Right lobe of liver (tissue), 6 donors: ENCODE measurements at regions of chr19 and their contacts with region 1.

Region 1: GRCh38 chr19:11035441-11036377 is 53.6 kb upstream of the LDLR start:
- DNase-seq: peak; percentile 92 to 93 (median 93)
- ATAC-seq: peak; percentile 97 to 99 (median 98)
- H3K4me3 ChIP-seq: no peak overlapping the region
- H3K27ac ChIP-seq: no peak overlapping the region
- H3K4me1 ChIP-seq: no peaks in the 10 kb centered on the region
- H3K27me3 ChIP-seq: no peaks in the 10 kb centered on the region
- CTCF ChIP-seq: peak; percentile 85 to 92 (median 90)
- POLR2A ChIP-seq: no peak

Region 2: DNA sequence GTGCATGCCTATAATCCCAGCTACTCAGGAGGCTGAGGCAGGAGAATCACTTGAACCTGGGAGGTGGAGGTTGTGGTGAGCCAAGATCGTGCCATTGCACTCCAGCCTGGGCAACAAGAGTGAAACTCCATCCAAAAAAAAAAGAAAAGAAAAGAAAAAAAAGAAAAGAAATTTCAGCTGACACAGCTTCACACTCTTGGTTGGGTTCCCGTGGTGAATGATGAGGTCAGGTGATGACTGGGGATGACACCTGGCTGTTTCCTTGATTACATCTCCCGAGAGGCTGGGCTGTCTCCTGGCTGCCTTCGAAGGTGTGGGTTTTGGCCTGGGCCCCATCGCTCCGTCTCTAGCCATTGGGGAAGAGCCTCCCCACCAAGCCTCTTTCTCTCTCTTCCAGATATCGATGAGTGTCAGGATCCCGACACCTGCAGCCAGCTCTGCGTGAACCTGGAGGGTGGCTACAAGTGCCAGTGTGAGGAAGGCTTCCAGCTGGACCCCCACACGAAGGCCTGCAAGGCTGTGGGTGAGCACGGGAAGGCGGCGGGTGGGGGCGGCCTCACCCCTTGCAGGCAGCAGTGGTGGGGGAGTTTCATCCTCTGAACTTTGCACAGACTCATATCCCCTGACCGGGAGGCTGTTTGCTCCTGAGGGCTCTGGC is 75.5 kb after region 1 on chr19:
- intact Hi-C with region 1: loop called in 1 of 2 experiments (anchors 10 kb)
- DNase-seq: no peak
- ATAC-seq: peak in 3 of 4 donors; percentile 4 to 18 (median 5)
- H3K4me3 ChIP-seq: no peak overlapping the region
- H3K27ac ChIP-seq: no peak overlapping the region
- H3K4me1 ChIP-seq: peaks cover 0 to 18% (median 6%) of the 10 kb centered on the region in 4 donors
- H3K27me3 ChIP-seq: no peaks in the 10 kb centered on the region
- CTCF ChIP-seq: no peak
- POLR2A ChIP-seq: no peak

Region 3: DNA sequence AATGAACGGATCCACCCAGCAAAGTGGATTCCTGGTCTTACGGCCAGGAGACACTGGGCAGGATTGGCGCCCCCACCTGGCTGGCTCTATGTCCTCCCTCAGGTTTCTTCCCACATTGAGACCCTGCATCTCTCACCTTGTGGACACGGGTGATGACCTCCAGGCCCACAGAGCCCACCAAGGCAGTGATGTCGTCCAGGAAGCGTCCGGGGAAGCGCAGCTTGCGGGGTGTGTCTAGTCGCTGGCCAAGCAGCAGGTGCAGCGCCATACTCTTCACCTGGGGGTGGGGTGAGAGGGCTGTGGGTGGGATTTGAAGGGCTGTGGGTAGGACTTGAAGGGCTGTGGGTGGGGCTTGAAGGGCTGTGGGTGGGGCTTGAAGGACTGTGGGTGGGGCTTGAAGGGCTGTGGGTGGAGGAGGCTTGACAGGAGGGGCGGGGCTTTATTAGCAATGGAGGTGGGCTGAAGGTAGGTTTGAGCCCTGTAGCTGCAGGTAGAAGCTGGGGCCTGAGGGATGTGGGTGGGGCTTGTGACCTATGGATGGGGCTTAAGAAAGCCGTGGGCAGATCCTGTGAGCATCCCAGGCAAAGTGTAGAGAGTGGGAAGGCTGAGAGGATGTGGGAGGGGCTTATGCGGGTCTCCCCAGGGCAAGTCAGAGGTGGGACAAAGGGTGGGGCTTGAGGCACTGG is 191.6 kb after region 1 on chr19:
- intact Hi-C with region 1: no loop called
- DNase-seq: no peak
- ATAC-seq: peak in 1 of 4 donors; percentile 49
- H3K4me3 ChIP-seq: no peak overlapping the region
- H3K27ac ChIP-seq: no peak overlapping the region
- H3K4me1 ChIP-seq: peaks cover 0 to 11% (median 4%) of the 10 kb centered on the region in 4 donors
- H3K27me3 ChIP-seq: no peaks in the 10 kb centered on the region
- CTCF ChIP-seq: peak in 1 of 4 donors; percentile 14
- POLR2A ChIP-seq: no peak